CD4-positive, alpha-beta T cell (primary cell): ENCODE measurements at regions of chrX and their contacts with region 1.

Region 1: GRCh38 chrX:119698845-119699244 is 5.9 kb upstream of the SEPTIN6 start:
- DNase-seq: peak in 3 of 14 experiments; percentile 55 to 71 (median 68)
- ATAC-seq: peak; percentile 56
- H3K4me3 ChIP-seq: no peak overlapping the region
- H3K4me3 Mint-ChIP-seq: no peak overlapping the region
- H3K27ac ChIP-seq: no peak overlapping the region
- H3K27ac Mint-ChIP-seq: no peak overlapping the region
- H3K4me1 ChIP-seq: peaks cover 5% of the 10 kb centered on the region
- H3K4me1 Mint-ChIP-seq: peaks cover 6% of the 10 kb centered on the region
- H3K27me3 ChIP-seq: no peaks in the 10 kb centered on the region
- H3K27me3 Mint-ChIP-seq: no peaks in the 10 kb centered on the region
- CTCF ChIP-seq: peak; percentile 53

Region 2: DNA sequence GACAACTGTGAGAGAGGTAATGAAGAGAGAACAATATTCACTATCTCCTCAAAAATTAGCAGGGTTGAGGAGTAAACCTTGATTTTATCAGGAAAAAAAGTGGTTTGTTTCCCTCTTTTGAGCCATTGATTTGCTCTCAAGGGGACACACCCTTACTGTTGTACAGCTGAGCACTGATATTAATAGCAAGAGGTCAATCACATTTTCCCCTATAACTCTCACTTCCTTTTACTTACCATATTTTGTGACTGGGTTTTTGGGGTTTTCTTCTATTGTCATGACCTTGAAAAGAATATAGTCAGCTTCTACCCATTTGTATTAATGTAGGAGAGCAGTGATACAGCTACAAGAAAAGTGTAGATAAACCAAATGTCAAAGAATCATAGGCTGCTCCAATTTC is 794.6 kb before region 1 on chrX:
- CTCF ChIA-PET with region 1: no interaction called
- POLR2A ChIA-PET with region 1: no interaction called
- intact Hi-C with region 1: no loop called
- DNase-seq: no peak
- ATAC-seq: no peak
- H3K4me3 ChIP-seq: no peak overlapping the region
- H3K4me3 Mint-ChIP-seq: no peak overlapping the region
- H3K27ac ChIP-seq: no peak overlapping the region
- H3K27ac Mint-ChIP-seq: no peak overlapping the region
- H3K4me1 ChIP-seq: no peaks in the 10 kb centered on the region
- H3K4me1 Mint-ChIP-seq: no peaks in the 10 kb centered on the region
- H3K27me3 ChIP-seq: no peaks in the 10 kb centered on the region
- H3K27me3 Mint-ChIP-seq: no peaks in the 10 kb centered on the region
- CTCF ChIP-seq: no peak

Region 3: DNA sequence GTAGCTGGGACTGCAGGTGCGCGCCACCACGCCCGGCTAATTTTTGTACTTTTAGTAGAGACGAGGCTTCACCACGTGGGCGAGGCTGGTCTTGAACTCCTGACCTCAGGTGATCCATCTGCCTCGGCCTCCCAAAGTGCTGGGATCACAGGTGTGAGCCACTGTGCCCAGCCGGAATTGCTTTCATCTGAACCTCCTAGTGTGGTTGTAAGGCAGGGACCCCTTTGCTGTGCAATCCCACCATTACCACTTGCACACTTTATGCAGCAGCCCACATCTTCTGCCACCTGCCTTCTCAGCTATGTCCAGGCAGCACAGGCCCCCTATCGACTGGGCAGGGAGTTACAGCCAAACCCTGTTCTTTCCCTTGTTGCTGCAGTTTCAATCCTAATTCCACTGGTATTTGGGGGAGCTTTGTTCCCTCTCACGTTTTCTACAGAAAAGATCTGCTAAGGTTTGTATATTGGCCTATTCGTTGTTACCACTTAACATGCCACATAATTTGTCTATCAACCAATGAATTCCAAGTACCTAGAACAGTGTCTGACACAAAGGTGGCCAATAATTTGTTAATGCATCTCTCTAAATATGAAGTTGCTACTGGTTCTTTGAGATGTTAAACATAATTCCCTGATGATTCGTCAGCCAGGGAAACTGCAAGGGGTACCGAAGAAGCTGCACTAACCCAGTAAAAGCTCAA is 86.1 kb after region 1 on chrX:
- CTCF ChIA-PET with region 1: no interaction called
- POLR2A ChIA-PET with region 1: no interaction called
- intact Hi-C with region 1: loop called in 1 of 2 experiments (anchors 2 kb)
- DNase-seq: peak; percentile 15 to 70 (median 36)
- ATAC-seq: peak; percentile 88
- H3K4me3 ChIP-seq: no peak overlapping the region
- H3K4me3 Mint-ChIP-seq: no peak overlapping the region
- H3K27ac ChIP-seq: no peak overlapping the region
- H3K27ac Mint-ChIP-seq: peak overlapping the region; percentile 15
- H3K4me1 ChIP-seq: peaks cover 28% of the 10 kb centered on the region
- H3K4me1 Mint-ChIP-seq: peaks cover 27% of the 10 kb centered on the region
- H3K27me3 ChIP-seq: no peaks in the 10 kb centered on the region
- H3K27me3 Mint-ChIP-seq: no peaks in the 10 kb centered on the region
- CTCF ChIP-seq: peak; percentile 41